ENCODE measurements at regions of chr22 and their contacts with region 1.

Region 1: DNA sequence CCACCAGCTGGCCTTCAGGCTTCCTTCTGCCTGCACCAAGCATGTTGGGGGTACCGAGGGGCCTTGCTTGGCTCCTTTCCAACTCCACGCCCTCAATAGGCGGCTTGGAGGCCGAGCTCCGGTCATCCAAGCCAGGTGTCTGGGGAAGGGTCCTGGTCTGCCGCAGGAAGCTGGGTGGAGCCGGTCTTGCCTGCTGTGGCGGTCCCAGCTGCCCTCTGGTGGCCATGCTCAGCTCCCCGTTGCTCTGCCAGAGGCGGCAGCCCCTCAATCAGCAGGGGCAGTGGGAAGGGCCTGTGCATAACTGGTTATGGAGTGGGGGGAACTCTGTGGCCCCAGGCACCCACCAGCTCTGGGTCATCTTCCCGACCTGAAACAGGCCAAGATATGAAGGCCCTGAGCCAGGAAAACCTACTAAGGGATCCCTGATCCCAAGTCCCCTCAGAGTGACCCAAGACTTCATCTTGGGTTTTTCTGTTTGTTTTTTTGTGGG is 3.2 kb downstream of the ARVCF start:
- DNase-seq: peak; percentile 85
- H3K4me3 ChIP-seq: no peak overlapping the region
- H3K27ac ChIP-seq: no peak overlapping the region
- H3K4me1 ChIP-seq: peaks cover 0 to 30% (median 21%) of the 10 kb centered on the region in 4 donors
- H3K27me3 ChIP-seq: no peaks in the 10 kb centered on the region
- CTCF ChIP-seq: peak; percentile 74 to 96 (median 88)
- EP300 ChIP-seq: no peak
- POLR2A ChIP-seq: no peak

Region 2: GRCh38 chr22:19970479-19971275 is 42.8 kb before region 1 on chr22:
- intact Hi-C with region 1: loop called (anchors 1 kb)
- DNase-seq: peak; percentile 83
- H3K4me3 ChIP-seq: no peak overlapping the region
- H3K27ac ChIP-seq: peak overlapping the region; percentile 4 to 50 (median 30)
- H3K4me1 ChIP-seq: peaks cover 0 to 19% (median 16%) of the 10 kb centered on the region in 4 donors
- H3K27me3 ChIP-seq: no peaks in the 10 kb centered on the region
- CTCF ChIP-seq: peak; percentile 85 to 98 (median 88)
- EP300 ChIP-seq: no peak
- POLR2A ChIP-seq: no peak